ENCODE measurements at regions of chr2 and their contacts with region 1.

Region 1: DNA sequence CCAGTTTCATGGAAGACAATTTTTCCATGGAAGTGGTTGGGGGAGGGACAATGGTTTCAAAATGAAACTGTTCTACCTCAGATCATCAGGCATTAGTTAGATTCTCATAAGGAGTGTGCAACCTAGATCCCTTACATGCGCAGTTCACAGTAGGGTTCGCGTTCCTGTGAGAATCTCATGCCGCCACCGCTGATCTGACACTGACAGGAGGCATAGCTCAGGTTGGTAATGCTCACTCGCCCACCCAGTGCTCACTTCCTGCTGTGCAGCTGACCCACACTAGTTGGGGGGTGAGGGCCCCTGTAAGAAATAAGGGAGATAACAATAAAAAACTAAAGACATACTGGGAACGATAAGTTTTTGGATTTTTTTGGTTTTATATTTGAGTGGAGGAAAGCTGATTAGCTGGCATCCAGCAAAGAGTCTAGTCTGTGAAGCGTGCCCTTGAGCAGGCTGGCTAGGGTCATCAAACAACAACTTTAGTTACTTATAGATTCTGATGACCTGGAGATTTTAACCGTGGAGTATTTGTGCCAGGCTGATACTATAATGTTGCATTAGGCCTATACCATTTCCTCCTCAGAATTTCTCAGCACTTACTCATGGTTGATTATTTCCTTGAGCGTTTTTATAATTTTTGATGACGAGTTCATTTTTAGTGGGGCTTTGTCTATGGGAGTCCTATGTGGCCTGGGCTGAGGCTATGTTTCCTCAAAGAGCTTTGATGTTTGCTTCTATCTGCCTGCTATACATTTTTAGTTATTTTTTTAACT is 6.3 kb upstream of the MCFD2 start:
- DNase-seq: no peak
- H3K4me3 ChIP-seq: no peak overlapping the region
- H3K27ac ChIP-seq: peak overlapping the region in 1 of 2 experiments; percentile 25; a peak in 1 of 4 replicates
- H3K4me1 ChIP-seq: peaks cover 4 to 7% of the 10 kb centered on the region in 2 experiments; a peak in 3 of 4 replicates
- H3K27me3 ChIP-seq: no peaks in the 10 kb centered on the region
- CTCF ChIP-seq: no peak
- EP300 ChIP-seq: no peak
- RAD21 ChIP-seq: no peak

Region 2: GRCh38 chr2:46937471-46937901 is 15.6 kb after region 1 on chr2:
- CTCF ChIA-PET with region 1: interaction called, 50 read pairs
- POLR2A ChIA-PET with region 1: no interaction called
- DNase-seq: no peak
- H3K4me3 ChIP-seq: no peak overlapping the region
- H3K27ac ChIP-seq: no peak overlapping the region
- H3K4me1 ChIP-seq: peaks cover 10% of the 10 kb centered on the region in 2 experiments; a peak in 2 of 4 replicates
- H3K27me3 ChIP-seq: no peaks in the 10 kb centered on the region
- CTCF ChIP-seq: peak; percentile 62
- EP300 ChIP-seq: no peak
- RAD21 ChIP-seq: peak; percentile 36; the same call in 1 of the 2 replicates

Measured in SK-N-SH (cell line).